Left cardiac atrium (tissue), 4 donors: ENCODE measurements at regions of chr7 and their contacts with region 1.

Region 1: DNA sequence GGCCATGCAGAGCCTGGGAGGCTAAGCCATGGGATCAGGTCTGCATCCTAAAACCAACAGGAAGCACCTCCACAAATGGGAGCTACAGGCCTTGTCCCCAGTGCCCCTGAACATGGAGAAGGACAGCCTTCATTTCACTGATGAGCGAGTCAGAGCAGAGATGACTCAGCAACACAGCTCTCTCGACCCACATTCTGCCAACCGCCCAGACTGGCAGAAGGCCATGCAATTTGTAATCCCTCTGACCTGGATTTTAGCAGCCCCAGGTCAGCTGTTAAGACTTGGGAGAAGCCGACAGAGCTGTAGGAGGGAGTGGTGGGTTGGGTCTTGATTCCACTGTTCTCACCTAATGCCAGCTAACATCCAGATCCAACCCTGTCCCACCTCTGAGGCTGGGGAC is 25.5 kb downstream of the VOPP1 start:
- DNase-seq: peak; percentile 74
- ATAC-seq: peak; percentile 90 to 94

Region 2: DNA sequence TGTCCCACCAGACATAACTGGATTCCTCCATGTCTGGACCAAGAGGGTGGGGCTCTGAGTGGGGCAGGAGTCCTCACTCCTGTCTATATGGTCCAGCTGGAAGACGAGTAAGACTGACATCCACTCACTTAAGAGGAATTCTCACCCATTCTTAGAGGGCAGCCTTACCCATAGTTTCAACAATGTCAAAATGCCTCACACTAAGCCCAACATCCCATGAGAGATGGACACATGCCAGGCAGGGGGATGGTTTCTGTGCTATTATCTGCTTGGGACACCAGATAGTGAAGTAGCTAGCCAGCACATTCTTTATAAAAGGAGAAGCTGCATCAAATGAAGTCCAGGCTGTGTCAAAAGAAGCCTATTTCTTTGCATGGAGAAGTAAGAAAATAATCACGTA is 186.3 kb before region 1 on chr7:
- intact Hi-C with region 1: no loop called
- DNase-seq: no peak
- ATAC-seq: no peak

Region 3: GRCh38 chr7:55400191-55400590 is 146.6 kb before region 1 on chr7:
- intact Hi-C with region 1: no loop called
- DNase-seq: no peak
- ATAC-seq: no peak

Region 4: GRCh38 chr7:55432939-55433784 is 113.7 kb before region 1 on chr7:
- intact Hi-C with region 1: no loop called
- DNase-seq: no peak
- ATAC-seq: peak; percentile 35 to 50

Region 5: DNA sequence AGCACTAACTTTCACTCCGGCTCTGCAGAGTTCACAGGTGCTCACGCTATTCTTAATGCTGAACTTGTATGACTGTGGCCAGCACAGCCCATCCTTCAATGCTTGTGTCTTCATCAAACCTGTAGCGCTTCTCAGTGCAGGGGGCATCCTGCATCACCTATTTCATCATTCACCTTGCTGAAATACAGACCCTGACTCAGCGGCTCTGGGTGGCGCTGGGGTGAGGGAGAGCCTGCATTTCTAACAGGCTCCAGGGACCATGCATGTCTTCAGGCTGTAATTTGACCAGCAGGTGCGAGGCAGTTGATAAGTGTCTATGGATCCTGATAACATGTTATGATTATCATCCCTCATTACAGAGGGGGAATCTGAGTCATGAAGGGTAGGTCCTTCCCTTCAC is 63.8 kb before region 1 on chr7:
- intact Hi-C with region 1: loop called in 1 of 2 experiments (anchors 10 kb)
- DNase-seq: no peak
- ATAC-seq: no peak